ENCODE measurements at regions of chr12 and their contacts with region 1.

Region 1: DNA sequence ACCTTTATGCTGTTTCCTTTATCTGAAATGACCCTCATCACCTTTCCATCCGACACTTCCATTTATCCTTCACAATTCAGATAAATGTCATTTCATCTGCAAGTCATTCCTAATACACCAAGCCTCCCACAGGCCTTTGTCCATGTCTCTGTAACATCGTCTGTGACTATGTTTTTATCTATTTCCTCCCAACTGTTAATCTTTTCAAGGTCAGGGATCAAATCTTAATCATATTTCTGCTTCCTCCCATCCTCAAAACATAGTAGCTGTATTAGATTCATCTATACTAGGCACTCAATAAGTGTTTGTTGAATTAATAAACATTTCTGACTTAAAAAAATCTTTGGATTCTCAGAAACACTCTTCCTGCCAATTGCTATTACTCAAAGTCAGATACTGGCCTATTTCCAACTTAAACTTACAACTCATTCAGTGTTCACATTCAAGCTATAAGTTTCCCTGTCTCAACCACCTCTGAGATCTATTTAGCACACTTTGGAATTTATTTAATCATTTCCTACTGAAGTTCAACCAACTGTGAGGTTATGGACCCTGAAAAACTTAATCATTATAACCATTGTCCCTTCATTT is 100.2 kb upstream of the ALX1 start:
- DNase-seq: peak; percentile 95
- H3K4me3 ChIP-seq: no peak overlapping the region
- H3K27ac ChIP-seq: peak overlapping the region; percentile 43
- H3K4me1 ChIP-seq: peaks cover 24% of the 10 kb centered on the region
- H3K27me3 ChIP-seq: no peaks in the 10 kb centered on the region
- CTCF ChIP-seq: no peak
- POLR2A ChIP-seq: peak; percentile 48

Region 2: GRCh38 chr12:85147331-85147730 is 32.4 kb before region 1 on chr12:
- CTCF ChIA-PET with region 1: no interaction called
- POLR2A ChIA-PET with region 1: no interaction called
- dilution Hi-C with region 1: no loop called
- intact Hi-C with region 1: no loop called
- DNase-seq: no peak
- H3K4me3 ChIP-seq: no peak overlapping the region
- H3K27ac ChIP-seq: no peak overlapping the region
- H3K4me1 ChIP-seq: no peaks in the 10 kb centered on the region
- H3K27me3 ChIP-seq: no peaks in the 10 kb centered on the region
- CTCF ChIP-seq: no peak
- POLR2A ChIP-seq: no peak

Region 3: DNA sequence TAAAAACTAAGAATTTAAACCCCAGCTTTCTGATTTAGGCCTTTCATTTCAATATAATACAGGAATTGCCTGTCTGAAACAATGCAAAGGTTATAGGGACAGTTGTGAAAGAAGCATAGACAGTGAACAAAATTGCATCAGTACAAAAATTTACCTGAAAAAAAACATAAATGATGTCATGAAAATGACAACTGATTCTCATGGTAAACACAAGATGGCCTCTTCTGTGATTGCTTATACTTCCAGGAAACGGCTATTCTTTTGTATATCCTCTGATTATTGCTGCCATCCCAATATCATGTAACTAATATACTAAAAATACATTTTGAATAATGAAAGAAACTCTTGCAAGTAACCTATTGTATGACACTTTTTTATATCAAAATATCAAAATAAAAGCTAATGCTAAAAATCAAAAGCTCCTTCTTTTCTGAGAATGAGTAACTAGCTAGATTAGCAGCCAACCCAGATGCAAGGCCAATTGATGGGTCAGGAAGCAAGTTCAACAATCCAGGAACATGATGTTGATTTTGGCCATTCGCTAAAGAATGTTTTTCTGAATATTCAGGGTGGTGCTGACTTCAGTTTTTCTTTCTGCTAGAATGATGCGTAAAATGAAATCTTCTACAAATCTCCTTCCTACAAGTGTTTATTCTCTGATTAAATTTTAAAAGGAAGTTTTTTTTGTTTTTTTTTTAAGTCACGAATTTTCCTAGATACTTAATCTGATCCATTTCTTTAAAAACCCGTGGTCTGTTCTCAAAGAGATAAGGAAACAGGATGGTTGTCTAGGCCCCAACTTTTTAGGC is 183.8 kb after region 1 on chr12:
- CTCF ChIA-PET with region 1: no interaction called
- POLR2A ChIA-PET with region 1: no interaction called
- dilution Hi-C with region 1: no loop called
- intact Hi-C with region 1: loop called (anchors 5 kb)
- DNase-seq: peak; percentile 91
- H3K4me3 ChIP-seq: no peak overlapping the region
- H3K27ac ChIP-seq: peak overlapping the region; percentile 19
- H3K4me1 ChIP-seq: peaks cover 18% of the 10 kb centered on the region
- H3K27me3 ChIP-seq: no peaks in the 10 kb centered on the region
- CTCF ChIP-seq: no peak
- POLR2A ChIP-seq: no peak

Region 4: GRCh38 chr12:85836197-85837090 is 656.7 kb after region 1 on chr12 and contains the start of gene RASSF9:
- CTCF ChIA-PET with region 1: no interaction called
- POLR2A ChIA-PET with region 1: no interaction called
- dilution Hi-C with region 1: no loop called
- intact Hi-C with region 1: no loop called
- DNase-seq: peak; percentile 84
- H3K4me3 ChIP-seq: peak within 1 kb of the TSS; percentile 5 to 89 (median 39)
- H3K27ac ChIP-seq: peak within 1 kb of the TSS; percentile 49
- H3K4me1 ChIP-seq: peaks cover 15% of the 10 kb centered on the region
- H3K27me3 ChIP-seq: no peaks in the 10 kb centered on the region
- CTCF ChIP-seq: no peak
- POLR2A ChIP-seq: no peak
- total RNA-seq, gene RASSF9: 2.3 and 3.6 TPM in 2 replicates

Measured in endothelial cell of umbilical vein (primary cell).